BJ (cell line): ENCODE measurements at regions of chr10 and their contacts with region 1.

Region 1: DNA sequence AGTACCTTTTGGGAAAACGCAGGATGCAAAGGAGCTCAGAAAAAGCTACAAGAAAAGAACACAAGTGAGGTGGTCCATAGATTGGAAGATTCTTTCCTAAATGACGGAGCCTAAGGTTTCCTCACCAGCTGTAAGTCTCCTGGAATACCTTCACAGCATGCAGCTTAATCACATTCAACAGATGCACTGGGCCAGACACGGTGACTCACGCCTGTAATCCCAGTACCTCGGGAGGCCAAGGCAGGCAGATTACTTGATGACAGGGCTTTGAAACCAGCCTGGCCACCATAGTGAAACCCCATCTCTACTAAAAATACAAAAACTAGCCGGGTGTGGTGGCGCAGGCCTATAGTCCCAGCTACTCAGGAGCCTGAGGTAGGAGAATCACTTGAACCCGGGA is 228.7 kb downstream of the FRMD4A start:
- DNase-seq: no peak
- H3K4me3 ChIP-seq: no peak overlapping the region
- H3K27me3 ChIP-seq: no peaks in the 10 kb centered on the region; the same call in 1 of the 2 replicates
- CTCF ChIP-seq: no peak

Region 2: DNA sequence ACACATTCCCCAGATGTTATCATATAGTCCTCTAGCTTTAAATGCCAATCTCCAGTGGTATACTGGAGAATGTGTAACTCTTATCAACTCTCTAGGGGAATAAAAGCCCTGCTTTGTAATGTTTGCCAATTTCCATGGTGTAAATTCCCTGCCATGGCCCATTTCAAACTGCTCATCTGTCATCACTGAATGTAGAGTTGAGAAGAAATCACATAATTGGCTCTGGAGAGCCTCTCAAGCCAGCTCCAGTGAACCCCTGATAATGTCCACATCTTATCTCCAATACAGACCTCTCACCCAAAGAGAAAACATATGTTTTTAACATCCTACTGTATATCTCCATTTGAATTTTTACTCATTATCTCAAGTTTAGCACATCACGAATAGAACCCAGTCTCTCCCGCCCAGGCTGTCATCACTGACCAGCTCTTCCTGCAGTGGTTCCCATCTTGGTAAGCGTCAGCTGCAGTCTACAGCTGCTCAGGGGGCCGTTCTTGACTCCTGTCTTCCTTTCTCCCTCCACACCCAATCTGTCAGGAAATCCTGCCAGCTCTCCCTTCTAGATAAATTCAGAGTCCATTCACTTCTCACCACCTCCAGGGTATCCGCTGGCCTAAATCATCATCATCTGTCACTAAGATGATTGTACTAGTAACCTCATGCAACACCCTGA is 103.8 kb before region 1 on chr10:
- CTCF ChIA-PET with region 1: no interaction called
- POLR2A ChIA-PET with region 1: interaction called, 10 read pairs
- DNase-seq: no peak
- H3K4me3 ChIP-seq: no peak overlapping the region
- H3K27me3 ChIP-seq: no peaks in the 10 kb centered on the region; the same call in 1 of the 2 replicates
- CTCF ChIP-seq: no peak

Region 3: GRCh38 chr10:14173706-14174594 is 71.9 kb after region 1 on chr10:
- CTCF ChIA-PET with region 1: no interaction called
- POLR2A ChIA-PET with region 1: no interaction called
- DNase-seq: no peak
- H3K4me3 ChIP-seq: peak overlapping the region; percentile 39
- H3K27me3 ChIP-seq: peaks cover 25% of the 10 kb centered on the region
- CTCF ChIP-seq: no peak